ENCODE measurements at regions of chr4 and their contacts with region 1.

Region 1: DNA sequence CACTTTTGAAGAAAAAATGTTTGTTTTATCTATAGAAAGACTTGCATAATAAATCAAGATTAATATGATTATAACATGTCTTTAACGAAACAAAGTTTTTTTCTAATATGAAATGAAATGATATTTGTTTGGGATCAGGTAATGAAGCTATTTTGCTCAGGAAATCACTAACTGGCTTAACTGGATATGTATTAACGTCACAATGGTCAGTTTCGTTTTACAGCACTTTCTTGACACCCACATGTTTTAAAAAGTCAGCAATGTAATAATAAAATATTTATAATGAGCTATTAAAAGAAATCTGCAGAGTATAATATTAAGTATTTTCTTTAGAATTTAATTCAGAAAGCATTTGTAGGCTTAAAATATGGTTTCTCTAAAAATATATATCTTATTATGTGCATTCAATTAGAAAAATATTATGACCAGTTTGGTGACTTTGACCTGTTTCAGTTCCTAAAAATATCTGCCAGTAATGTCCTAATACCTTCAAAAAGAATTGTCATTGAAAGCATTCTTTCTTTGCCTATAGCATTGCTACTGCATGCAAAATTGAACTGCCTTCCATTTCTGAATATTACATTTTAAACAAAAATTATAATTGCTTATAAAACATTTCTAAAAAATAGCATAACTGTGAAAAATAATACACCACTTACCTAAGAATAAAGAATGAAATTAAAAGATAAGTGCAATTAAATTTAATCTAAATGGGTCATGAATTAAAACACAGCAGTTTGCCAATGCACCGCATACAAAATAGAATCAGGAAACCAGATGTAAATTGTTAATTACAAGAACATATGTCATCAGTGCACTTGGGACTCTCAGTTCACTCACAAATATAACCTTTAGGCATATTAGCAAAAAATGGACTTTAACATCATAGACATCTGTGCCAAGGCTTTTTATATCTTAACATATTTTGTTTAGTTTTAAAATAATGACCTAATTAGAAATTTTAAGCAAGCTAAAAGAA is 31.6 kb downstream of the TIGD2 start:
- DNase-seq: no peak

Region 2: GRCh38 chr4:88706574-88706973 is 436.4 kb before region 1 on chr4:
- CTCF ChIA-PET with region 1: interaction called, 11 read pairs
- POLR2A ChIA-PET with region 1: no interaction called
- DNase-seq: peak; percentile 28

Region 3: DNA sequence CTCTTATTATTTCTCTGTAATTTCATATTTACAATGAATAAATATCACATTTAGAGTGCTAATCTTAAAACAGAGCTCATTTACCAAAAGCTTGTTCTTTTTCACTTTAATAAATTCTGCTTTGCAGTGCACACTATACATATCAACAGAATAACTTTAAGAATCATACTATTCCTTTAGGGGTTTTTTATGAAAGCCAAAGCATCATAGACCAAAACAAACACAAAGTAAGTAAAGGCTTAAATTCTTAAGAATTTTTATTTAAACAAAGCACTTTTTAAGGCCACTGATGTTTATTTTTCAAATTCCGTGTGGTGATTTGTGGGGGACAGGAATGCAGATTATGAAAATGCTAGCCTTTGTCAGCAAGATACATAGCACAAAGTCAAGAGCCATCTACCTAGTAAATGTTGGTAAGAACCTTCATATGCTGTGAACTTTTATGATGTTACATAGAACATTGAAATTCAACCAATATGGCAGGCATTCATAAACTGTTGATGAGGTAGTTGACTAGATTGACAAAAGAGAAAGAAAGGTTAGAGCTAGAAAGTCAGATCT is 13.8 kb before region 1 on chr4:
- CTCF ChIA-PET with region 1: no interaction called
- POLR2A ChIA-PET with region 1: no interaction called
- DNase-seq: no peak